Left colon (tissue), 2 donors: ENCODE measurements at regions of chr14 and their contacts with region 1.

Region 1: DNA sequence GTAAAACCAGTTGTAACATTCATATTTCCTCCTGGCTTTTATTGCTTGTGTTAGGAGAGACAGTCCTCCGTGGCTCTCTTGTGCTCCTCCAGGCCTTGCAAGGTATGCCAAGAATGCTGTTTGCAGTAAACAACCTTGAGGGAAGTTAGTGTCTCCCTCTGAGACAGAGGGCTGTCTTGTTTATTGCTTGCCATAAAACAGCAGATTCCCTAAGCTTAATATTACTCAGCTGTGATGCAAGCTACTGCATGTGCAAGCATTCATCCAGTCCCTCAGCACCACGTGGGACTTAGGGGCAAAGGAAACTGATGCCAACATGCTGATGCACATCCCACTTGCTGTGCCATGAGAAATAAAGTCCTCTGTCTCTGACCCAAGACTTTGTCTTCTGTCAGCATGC is 6.6 kb downstream of the POMT2 start:
- DNase-seq: no peak
- ATAC-seq: peak; percentile 76

Region 2: DNA sequence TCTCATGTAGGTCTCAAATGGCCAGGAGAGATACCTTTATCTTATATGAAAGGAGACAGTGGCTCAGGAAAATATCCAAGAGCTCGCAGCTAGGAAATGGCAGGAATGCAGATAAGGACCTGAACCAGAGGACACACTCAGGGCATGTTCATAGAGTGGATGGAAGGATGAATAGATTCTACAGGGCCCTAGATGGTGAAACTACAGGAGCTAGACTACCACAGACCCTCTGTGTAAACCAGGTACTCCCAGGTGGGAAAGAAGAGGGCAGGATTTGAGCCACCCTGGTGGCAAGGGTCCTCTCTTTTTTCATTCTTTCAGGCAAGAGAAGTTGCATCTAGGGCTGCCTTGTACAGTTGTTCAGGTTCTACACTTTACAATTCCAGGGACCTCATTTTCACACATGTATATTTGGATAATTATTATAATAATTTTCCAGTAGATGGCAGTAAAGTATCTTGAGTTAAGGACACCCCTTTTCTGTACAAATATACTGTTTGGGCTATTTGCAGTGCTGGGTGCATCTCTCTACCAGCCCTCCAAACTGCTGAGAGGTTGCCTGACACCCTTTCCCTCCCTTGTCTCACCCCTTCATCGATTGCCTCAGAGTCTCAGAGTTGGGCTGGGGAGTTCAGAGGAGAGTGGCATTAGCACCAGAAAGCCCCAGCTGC is 162.0 kb before region 1 on chr14:
- intact Hi-C with region 1: loop called in 1 of 2 experiments (anchors 5 kb)
- DNase-seq: no peak
- ATAC-seq: peak; percentile 73

Region 3: DNA sequence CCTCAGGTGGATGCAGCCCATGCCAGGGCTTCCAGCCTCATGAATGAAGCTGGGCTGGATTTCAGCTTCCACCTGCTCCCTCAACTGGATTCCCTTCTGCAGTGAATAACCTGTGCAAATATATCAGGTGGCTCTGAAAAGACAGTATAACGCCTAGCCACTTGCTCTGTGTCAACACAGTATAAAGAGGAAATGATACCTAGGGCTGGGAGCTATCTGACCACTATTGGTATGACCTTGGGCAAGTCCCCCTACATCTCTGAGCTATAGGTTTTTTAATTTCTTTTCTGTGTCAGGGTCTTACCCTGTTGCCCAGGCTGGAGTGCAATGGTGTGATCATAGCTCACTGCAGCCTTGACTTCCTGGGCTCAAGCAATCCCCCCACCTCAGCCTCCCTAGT is 164.8 kb after region 1 on chr14:
- intact Hi-C with region 1: no loop called
- DNase-seq: no peak
- ATAC-seq: no peak

Region 4: GRCh38 chr14:77516126-77516525 is 202.1 kb after region 1 on chr14:
- intact Hi-C with region 1: no loop called
- DNase-seq: no peak
- ATAC-seq: no peak